PC-9 (cell line): ENCODE measurements at regions of chr21 and their contacts with region 1.

Region 1: DNA sequence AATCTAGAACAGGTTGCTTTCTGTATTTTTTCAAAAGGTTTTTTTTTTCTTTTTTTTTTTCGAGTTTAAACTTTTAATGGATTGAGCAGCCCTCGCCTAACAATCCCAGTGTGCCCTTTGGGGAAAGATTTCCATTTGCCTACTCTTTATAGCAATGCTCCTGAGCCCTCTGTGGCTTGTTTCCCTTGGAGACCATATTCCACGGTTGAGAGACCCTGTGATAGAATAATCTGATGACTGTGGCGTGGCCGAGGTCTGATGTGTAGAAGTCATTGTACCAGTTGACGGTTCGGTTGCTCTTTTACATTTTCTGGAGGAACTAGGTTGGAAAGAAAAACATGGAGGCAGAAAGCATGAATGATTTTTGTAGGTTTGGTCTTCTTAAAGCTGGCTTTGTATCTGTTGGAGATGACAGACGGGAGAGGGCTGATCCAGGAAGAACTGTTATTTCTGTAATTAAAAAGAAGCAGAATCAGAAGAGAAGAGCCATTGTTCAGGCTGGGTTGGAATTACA is 305.7 kb upstream of the NRIP1 start:
- DNase-seq: no peak
- H3K4me3 ChIP-seq: no peak overlapping the region
- H3K27ac ChIP-seq: no peak overlapping the region
- H3K4me1 ChIP-seq: no peaks in the 10 kb centered on the region
- H3K27me3 ChIP-seq: no peaks in the 10 kb centered on the region
- CTCF ChIP-seq: no peak

Region 2: DNA sequence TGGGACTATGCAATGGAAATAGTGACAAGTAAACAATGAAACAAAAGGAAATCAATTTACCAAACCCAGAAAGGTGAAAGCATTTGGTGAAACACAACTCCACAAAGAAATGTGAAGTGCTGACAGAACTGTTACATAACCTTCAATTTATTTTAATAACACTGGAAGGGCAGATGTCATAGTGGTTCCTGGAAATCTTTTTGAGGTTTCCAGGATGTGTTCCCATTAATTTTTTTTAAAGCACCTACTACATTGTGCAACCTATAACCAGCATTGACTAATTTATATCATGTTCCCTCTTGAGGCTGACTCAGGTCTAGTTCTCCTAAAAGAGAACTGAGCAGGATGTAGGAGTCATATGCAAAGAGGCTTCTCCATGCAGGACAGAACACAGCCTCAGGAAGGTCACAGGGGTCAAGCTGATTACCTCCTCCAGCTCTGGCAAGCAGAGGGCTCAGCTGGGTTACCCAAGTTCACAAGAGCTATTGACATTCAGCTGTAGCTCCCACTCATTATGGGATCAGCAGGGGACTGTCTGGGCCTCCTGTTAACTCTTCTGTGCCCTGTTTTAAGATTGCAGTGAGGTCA is 148.6 kb before region 1 on chr21:
- CTCF ChIA-PET with region 1: no interaction called
- POLR2A ChIA-PET with region 1: no interaction called
- intact Hi-C with region 1: no loop called
- DNase-seq: peak; percentile 21 to 82
- H3K4me3 ChIP-seq: no peak overlapping the region
- H3K27ac ChIP-seq: peak overlapping the region; percentile 61
- H3K4me1 ChIP-seq: peaks cover 44% of the 10 kb centered on the region
- H3K27me3 ChIP-seq: no peaks in the 10 kb centered on the region
- CTCF ChIP-seq: no peak

Region 3: DNA sequence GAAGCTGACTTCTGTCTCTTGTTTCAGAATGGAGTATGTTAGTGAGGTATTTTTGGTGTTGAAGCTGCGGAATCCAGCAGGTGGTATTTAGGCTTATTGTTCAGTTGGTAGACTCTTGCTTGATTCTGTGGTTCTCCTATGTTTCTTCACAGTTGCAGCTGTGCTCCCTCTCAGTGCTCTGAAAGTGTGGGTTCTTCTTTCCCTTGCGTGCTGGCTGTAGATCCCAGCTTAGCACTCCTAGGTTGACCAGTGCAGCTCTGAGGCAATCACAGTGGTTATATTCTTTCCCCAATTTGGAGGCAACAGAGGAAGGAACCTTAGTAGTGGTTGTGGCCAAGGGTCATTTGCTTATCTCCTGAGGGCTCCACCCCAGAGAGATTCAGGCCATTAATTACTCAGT is 36.6 kb before region 1 on chr21:
- CTCF ChIA-PET with region 1: no interaction called
- POLR2A ChIA-PET with region 1: no interaction called
- intact Hi-C with region 1: no loop called
- DNase-seq: no peak
- H3K4me3 ChIP-seq: no peak overlapping the region
- H3K27ac ChIP-seq: no peak overlapping the region
- H3K4me1 ChIP-seq: no peaks in the 10 kb centered on the region
- H3K27me3 ChIP-seq: no peaks in the 10 kb centered on the region
- CTCF ChIP-seq: no peak

Region 4: GRCh38 chr21:15355066-15355465 is 15.5 kb before region 1 on chr21:
- CTCF ChIA-PET with region 1: no interaction called
- POLR2A ChIA-PET with region 1: interaction called, 13 read pairs
- intact Hi-C with region 1: no loop called
- DNase-seq: no peak
- H3K4me3 ChIP-seq: no peak overlapping the region
- H3K27ac ChIP-seq: no peak overlapping the region
- H3K4me1 ChIP-seq: no peaks in the 10 kb centered on the region
- H3K27me3 ChIP-seq: no peaks in the 10 kb centered on the region
- CTCF ChIP-seq: no peak